GM18951 (cell line): ENCODE measurements at regions of chr5 and their contacts with region 1.

Region 1: GRCh38 chr5:35089334-35090314 is 41.9 kb upstream of the AGXT2 start:
- POLR2A ChIP-seq: no peak

Region 2: GRCh38 chr5:34854459-34855174 is 235.0 kb before region 1 on chr5:
- in situ Hi-C with region 1: no loop called
- POLR2A ChIP-seq: no peak

Region 3: GRCh38 chr5:35172533-35172932 is 82.9 kb after region 1 on chr5:
- in situ Hi-C with region 1: no loop called
- POLR2A ChIP-seq: no peak

Region 4: GRCh38 chr5:35182541-35183535 is 93.2 kb after region 1 on chr5:
- in situ Hi-C with region 1: loop called (anchors 10 kb)
- POLR2A ChIP-seq: no peak

Region 5: DNA sequence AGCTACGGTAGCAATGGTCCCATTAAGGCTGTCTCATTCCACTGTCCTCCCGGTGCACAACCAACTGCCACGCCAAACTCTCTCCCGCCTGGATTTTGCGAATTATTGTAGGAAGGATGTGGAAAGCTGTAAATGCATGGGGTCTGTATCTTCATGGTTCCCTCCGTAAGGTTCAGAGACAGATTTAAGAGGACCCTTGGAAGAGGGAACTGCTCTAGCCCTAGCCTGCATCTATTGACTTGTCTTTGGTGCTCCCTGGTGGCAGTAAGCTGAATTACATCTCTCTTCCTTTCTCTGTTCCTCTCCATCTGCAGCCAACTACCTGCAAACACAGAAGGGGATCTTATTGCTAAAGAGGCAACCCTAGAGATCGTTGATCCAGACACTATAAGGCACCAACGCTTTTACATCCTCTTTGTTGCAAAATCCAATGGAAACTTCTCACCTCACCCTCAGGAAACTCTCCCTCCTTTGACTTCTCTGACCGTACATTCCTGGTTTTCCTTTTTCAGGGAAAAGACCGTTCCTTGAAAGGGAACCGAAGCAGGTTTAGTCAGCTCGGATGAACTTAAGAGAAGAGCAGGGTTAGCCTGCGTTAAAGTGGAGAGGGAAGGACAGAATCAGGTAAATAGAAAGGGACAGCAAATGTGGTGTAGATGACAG is 836.9 kb after region 1 on chr5:
- in situ Hi-C with region 1: loop called (anchors 25 kb)
- POLR2A ChIP-seq: no peak

Region 6: GRCh38 chr5:36373527-36374086 is 1284.0 kb after region 1 on chr5:
- in situ Hi-C with region 1: no loop called
- POLR2A ChIP-seq: no peak